Sigmoid colon (tissue), 7 donors: ENCODE measurements at regions of chr20 and their contacts with region 1.

Region 1: DNA sequence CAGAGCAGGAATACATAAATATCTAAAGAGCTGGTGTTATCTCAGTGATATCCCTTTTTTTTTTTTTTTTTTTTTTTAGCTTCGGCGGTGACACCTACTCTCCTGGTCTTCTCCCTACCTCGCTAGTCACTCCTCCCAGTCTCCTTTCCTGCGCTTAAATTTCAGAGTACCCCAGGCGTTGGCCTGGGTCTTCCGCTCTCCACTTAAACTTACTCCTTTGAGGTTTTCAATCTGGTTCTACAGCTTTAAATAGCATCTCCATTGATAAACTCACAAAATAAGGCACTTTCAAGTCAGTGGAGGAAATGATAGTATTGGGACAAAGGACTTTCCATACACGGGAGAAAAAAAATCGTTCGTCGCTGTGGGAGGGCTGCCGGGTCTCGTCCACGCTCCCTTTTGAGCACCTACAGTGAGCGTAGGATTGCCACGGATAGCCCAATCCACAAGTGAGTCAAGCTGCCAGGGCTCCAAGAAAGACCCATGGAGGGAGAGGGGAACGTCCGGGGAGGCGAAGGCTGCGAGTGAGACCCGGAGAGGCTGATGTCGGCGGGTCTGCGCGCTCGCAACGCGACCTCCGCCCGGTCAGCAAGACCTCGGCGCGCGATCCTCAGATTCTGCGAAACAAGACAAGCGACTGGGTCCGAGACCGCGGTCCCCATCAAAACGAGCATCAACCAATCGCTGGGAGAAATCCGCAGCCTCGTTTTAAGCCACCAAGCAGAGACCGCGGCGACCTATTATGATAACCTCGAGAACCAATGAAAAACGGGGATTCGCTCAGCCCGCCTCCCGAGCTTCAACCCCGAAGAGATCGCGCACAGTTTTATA is 672 bp upstream of the SRSF6 start:
- DNase-seq: peak; percentile 97
- H3K4me3 ChIP-seq: peak overlapping the region; percentile 86 to 98 (median 92)
- H3K27ac ChIP-seq: peak overlapping the region; percentile 99 to 100 (median 100)
- H3K4me1 ChIP-seq: peaks cover 0 to 28% (median 20%) of the 10 kb centered on the region in 4 donors
- H3K27me3 ChIP-seq: no peaks in the 10 kb centered on the region
- CTCF ChIP-seq: no peak
- EP300 ChIP-seq: no peak
- POLR2A ChIP-seq: no peak

Region 2: GRCh38 chr20:43513372-43514061 is 56.5 kb after region 1 on chr20:
- intact Hi-C with region 1: loop called (anchors 1 kb)
- DNase-seq: no peak
- H3K4me3 ChIP-seq: peak overlapping the region; percentile 24 to 70 (median 62)
- H3K27ac ChIP-seq: peak overlapping the region; percentile 67 to 79 (median 78)
- H3K4me1 ChIP-seq: peaks cover 0 to 16% (median 8%) of the 10 kb centered on the region in 4 donors
- H3K27me3 ChIP-seq: peaks cover 0 to 4% (median 0%) of the 10 kb centered on the region in 3 donors
- CTCF ChIP-seq: no peak
- EP300 ChIP-seq: no peak
- POLR2A ChIP-seq: peak; percentile 18 to 21